GM10248 (cell line): ENCODE measurements at regions of chr13 and their contacts with region 1.

Region 1: GRCh38 chr13:64410276-64411053 is 2819.7 kb downstream of the PCDH9 start:
- DNase-seq: no peak
- CTCF ChIP-seq: no peak

Region 2: GRCh38 chr13:64397701-64398100 is 12.8 kb before region 1 on chr13:
- CTCF ChIA-PET with region 1: interaction called, 12 read pairs
- POLR2A ChIA-PET with region 1: no interaction called
- DNase-seq: no peak
- CTCF ChIP-seq: no peak

Region 3: GRCh38 chr13:64510747-64511146 is 100.3 kb after region 1 on chr13:
- CTCF ChIA-PET with region 1: no interaction called
- POLR2A ChIA-PET with region 1: no interaction called
- DNase-seq: no peak
- CTCF ChIP-seq: no peak